Panc1 (cell line): ENCODE measurements at regions of chr5 and their contacts with region 1.

Region 1: DNA sequence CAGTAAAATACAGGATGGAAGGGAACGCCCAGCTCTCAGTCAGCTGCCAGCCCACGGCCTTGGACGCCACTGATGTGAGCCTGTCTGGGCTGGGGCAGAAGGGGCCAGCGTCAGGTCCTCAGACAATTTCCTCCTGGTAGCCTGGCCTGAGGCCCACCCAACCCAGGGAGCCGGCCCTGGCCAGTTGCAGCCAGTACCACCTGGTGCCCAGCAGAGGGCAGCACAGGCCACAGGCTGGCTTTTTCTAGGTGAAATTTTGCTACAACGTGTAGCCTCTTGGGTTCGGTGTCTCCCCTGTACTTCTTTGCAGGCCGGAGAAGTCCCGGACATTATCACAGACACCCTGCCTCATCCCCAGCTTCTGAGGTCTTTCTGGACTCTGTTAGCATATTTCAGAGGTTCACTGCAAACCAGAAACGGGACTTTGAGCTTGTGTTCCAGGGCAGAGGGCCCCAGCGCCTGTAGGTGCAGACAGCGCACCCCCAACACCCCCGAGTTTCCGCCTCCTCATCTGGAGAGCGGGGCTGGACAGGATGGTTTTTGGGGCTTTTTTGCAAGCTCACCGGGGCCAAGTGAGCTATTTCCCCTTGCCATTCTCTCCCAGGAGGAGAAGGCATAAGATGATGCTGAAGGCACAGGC is 45.9 kb upstream of the KCNMB1 start:
- DNase-seq: peak; percentile 30
- ATAC-seq: peak; percentile 90
- H3K4me3 ChIP-seq: no peak overlapping the region
- H3K27ac ChIP-seq: no peak overlapping the region
- H3K4me1 ChIP-seq: no peaks in the 10 kb centered on the region
- H3K27me3 ChIP-seq: peaks cover 4% of the 10 kb centered on the region; the same call in 1 of the 2 replicates
- CTCF ChIP-seq: peak; percentile 97

Region 2: DNA sequence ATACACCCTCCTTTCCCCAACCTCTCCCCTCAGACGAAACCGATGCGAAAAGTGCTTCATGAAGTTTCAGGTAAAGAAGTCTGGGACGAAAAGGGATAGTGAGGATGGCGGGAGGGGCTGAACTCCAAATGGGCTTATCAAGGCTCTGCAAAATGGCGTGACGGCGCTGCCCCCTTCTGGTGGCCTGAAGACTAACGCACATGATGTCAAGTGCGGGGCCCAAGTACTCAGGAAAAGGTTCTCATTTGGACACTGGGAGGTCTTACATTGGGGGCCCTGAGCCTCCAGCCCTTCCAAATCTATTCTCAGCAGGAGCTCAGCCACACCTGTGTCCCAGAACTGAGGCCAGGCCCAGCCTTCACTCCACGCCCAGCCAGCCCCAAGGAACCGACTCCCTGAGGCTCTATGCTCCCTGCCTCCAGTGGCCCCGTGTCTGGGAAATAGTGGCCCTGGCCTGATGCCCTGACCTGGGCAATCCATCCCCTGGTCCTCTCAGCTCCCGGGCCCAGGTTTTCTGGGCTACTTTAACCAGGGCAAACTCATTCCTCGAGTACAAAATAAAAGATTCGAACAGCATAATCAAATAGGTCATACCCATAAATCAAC is 188.6 kb after region 1 on chr5:
- CTCF ChIA-PET with region 1: no interaction called
- POLR2A ChIA-PET with region 1: no interaction called
- in situ Hi-C with region 1: no loop called
- intact Hi-C with region 1: loop called (anchors 1 kb)
- DNase-seq: no peak
- ATAC-seq: peak; percentile 84
- H3K4me3 ChIP-seq: no peak overlapping the region
- H3K27ac ChIP-seq: no peak overlapping the region
- H3K4me1 ChIP-seq: no peaks in the 10 kb centered on the region
- H3K27me3 ChIP-seq: no peaks in the 10 kb centered on the region
- CTCF ChIP-seq: peak; percentile 83

Region 3: GRCh38 chr5:170633235-170634081 is 198.4 kb after region 1 on chr5:
- CTCF ChIA-PET with region 1: interaction called, 6 read pairs
- POLR2A ChIA-PET with region 1: no interaction called
- in situ Hi-C with region 1: no loop called
- intact Hi-C with region 1: loop called (anchors 1 kb)
- DNase-seq: peak; percentile 27
- ATAC-seq: peak; percentile 44
- H3K4me3 ChIP-seq: peak overlapping the region; percentile 20 to 47
- H3K27ac ChIP-seq: no peak overlapping the region
- H3K4me1 ChIP-seq: peaks cover 3% of the 10 kb centered on the region
- H3K27me3 ChIP-seq: no peaks in the 10 kb centered on the region
- CTCF ChIP-seq: peak; percentile 44